ENCODE measurements at regions of chr22 and their contacts with region 1.

Region 1: GRCh38 chr22:41285820-41286638 is at the start of gene RANGAP1:
- DNase-seq: peak; percentile 99
- H3K4me3 Mint-ChIP-seq: peak within 1 kb of the TSS; percentile 80
- H3K27ac Mint-ChIP-seq: peak within 1 kb of the TSS; percentile 85
- H3K4me1 Mint-ChIP-seq: peaks cover 29% of the 10 kb centered on the region
- H3K27me3 Mint-ChIP-seq: no peaks in the 10 kb centered on the region
- CTCF ChIP-seq: no peak
- total RNA-seq, gene RANGAP1: 84.7 and 117 TPM in 2 replicates

Region 2: GRCh38 chr22:41256254-41256897 is 29.7 kb before region 1 on chr22:
- CTCF ChIA-PET with region 1: no interaction called
- POLR2A ChIA-PET with region 1: interaction called, 10 read pairs
- intact Hi-C with region 1: no loop called
- DNase-seq: peak; percentile 89
- H3K4me3 Mint-ChIP-seq: no peak overlapping the region
- H3K27ac Mint-ChIP-seq: peak overlapping the region; percentile 75
- H3K4me1 Mint-ChIP-seq: peaks cover 9% of the 10 kb centered on the region
- H3K27me3 Mint-ChIP-seq: no peaks in the 10 kb centered on the region
- CTCF ChIP-seq: peak; percentile 35

Region 3: GRCh38 chr22:41301105-41302020 is 15.3 kb after region 1 on chr22 and contains the start of gene ZC3H7B:
- CTCF ChIA-PET with region 1: interaction called, 5 read pairs
- POLR2A ChIA-PET with region 1: interaction called, 88 read pairs
- intact Hi-C with region 1: no loop called
- DNase-seq: peak; percentile 82
- H3K4me3 Mint-ChIP-seq: peak within 1 kb of the TSS; percentile 75
- H3K27ac Mint-ChIP-seq: peak within 1 kb of the TSS; percentile 90
- H3K4me1 Mint-ChIP-seq: peaks cover 26% of the 10 kb centered on the region
- H3K27me3 Mint-ChIP-seq: no peaks in the 10 kb centered on the region
- CTCF ChIP-seq: peak; percentile 38
- total RNA-seq, gene ZC3H7B: 42.9 and 53.4 TPM in 2 replicates

Region 4: DNA sequence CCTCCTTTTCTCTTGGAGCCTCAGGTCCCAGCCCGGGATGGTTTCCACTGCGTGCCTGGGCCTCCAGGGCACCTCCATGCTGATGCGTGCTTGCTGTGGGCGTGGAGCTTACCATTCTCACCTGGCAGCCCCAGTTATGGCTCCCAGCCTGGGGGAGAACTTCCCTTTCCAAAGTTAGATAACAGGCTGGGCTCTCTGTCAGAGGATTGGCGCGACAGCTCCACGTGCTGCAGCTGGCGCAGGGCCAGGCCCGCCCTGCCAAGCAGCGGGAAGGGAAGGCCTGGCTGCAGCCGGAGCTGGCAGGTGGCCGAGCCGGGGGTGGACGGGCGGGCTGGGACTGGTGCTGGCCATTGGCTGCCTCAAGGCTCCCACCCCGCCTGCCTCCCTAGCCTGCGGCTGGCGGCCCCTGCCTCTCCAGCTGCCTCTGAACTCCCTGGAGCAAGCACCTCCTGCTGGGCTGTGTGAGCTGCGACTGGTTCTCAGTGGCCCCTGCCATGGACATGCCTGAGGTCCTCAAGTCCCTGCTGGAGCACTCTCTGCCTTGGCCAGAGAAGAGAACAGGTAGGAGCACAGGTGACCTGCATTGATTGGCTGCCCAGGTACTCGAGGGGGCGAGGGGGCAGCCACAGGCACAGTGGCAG is 81.1 kb after region 1 on chr22:
- CTCF ChIA-PET with region 1: no interaction called
- POLR2A ChIA-PET with region 1: interaction called, 31 read pairs
- intact Hi-C with region 1: no loop called
- DNase-seq: peak; percentile 93
- H3K4me3 Mint-ChIP-seq: peak overlapping the region; percentile 47
- H3K27ac Mint-ChIP-seq: no peak overlapping the region
- H3K4me1 Mint-ChIP-seq: peaks cover 9% of the 10 kb centered on the region
- H3K27me3 Mint-ChIP-seq: no peaks in the 10 kb centered on the region
- CTCF ChIP-seq: peak; percentile 17

Region 5: DNA sequence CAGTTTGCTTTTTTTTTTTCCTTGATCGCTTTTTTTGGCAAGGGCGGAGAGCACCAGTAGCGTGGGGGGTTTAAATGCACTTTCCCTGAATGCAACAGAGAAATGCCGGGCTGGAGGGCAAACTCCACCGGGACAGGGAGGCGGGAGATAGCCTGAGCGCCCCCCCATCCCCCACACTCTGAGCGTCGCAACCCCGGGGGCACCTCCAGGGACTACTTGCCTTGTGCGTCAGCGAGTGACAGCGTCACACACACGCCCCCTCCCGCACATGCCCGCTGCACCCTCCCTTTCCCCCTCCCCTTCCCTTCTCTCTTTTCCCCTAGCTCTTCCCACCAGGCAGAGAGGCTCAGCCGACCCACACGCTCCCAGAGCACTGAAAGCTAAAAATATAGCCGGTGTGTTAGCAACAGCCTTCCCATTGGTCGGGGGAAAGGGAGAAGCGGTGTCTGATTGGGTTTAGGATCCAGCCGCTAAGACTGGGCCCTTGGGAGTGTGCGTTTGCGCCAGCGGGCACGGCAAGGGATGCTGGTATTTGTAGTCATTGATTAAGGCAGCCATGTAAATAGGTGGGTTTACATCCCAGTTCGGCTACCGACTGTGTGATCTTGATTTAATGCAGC is 162.3 kb after region 1 on chr22:
- CTCF ChIA-PET with region 1: no interaction called
- POLR2A ChIA-PET with region 1: interaction called, 10 read pairs
- intact Hi-C with region 1: no loop called
- DNase-seq: peak; percentile 100
- H3K4me3 Mint-ChIP-seq: peak overlapping the region; percentile 96
- H3K27ac Mint-ChIP-seq: peak overlapping the region; percentile 97
- H3K4me1 Mint-ChIP-seq: peaks cover 11% of the 10 kb centered on the region
- H3K27me3 Mint-ChIP-seq: no peaks in the 10 kb centered on the region
- CTCF ChIP-seq: no peak